Dorsolateral prefrontal cortex (tissue), 120 donors: ENCODE measurements at regions of chr19 and their contacts with region 1.

Region 1: DNA sequence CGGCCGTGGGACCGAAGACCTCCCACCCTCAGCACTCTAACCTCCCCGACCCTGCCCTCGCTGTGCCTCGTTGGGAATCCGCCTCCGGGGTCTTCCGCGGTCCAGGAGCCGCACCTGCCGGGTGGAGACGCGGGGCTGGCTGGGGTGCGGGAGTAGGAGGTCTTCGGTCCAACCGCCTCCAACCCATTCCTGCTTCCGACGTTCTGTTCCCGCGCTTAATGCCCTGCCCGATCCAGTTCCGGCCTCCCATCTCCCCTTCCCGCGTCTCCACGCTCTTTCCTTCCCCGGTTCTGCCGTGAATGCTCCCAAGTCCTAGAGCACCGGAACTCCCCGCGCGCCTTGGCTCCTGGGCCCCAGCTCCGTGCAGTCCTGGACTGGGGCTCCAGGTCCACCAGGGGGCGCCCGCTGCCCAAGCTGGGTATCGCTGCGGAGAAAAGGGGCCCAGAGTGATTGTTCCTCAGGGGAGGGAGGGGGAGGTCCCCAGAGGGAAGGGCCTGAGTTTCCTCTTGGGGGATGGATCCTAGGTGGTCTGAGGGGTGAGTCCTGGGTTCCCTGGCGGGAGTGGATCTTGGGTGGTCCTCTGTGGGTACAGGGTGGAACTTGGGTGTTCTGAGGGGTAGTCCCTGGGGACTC is 14.1 kb upstream of the TNFSF9 start:
- DNase-seq: peak; percentile 85 to 95 (median 93)
- H3K4me3 ChIP-seq: peak overlapping the region; percentile 52 to 87 (median 74)
- H3K27ac ChIP-seq: peak overlapping the region; percentile 6 to 100 (median 91)
- H3K27me3 ChIP-seq: no peaks in the 10 kb centered on the region
- CTCF ChIP-seq: peak; percentile 71 to 98 (median 95)

Region 2: GRCh38 chr19:6460101-6460853 is 56.5 kb before region 1 on chr19:
- intact Hi-C with region 1: loop called in 1 of 2 experiments (anchors 5 kb)
- DNase-seq: peak; percentile 98 to 100 (median 99)
- H3K4me3 ChIP-seq: peak overlapping the region; percentile 52 to 98 (median 86)
- H3K27ac ChIP-seq: peak overlapping the region; percentile 9 to 92 (median 83)
- H3K27me3 ChIP-seq: peaks cover 0 to 27% (median 13%) of the 10 kb centered on the region in 45 donors
- CTCF ChIP-seq: peak in 54 of 56 donors; percentile 7 to 75 (median 52)

Region 3: DNA sequence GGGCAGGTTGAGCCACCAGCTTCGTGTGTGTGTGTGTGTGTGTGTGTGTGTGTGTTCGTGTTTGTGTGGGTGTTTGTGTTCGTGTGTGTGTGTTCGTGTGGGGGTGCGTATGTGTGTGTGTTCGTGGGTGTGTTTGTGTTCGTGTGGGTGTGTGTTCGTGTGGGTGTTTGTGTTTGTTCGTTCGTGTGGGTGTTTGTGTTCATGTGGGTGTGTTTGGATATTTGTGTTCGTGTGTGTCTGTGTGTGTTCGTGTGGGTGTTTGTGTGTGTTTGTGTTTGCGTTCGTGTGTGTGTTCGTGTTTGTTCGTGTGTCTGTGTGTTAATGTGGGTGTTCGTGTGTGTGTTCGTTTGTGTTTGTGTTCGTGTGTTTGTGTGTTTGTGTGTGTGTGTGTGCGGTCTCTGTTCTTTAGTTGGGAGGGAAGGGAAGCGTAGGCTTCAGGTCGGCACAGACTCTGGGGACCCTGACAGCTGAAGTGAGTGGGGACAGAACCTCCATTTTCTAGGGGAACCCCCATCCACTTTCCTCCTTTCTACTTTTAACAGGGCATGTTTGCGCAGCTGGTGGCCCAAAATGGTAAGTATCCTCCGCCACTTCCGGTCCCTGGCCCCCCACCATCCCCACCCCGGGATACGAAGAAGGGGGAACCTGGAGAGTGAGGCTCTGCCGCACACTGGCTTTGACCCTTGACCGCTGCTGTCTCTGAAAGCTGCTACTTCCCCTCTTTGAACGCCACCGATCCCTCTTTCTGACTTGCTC is 15.6 kb after region 1 on chr19:
- intact Hi-C with region 1: no loop called
- DNase-seq: no peak
- H3K4me3 ChIP-seq: peak overlapping the region in 54 of 59 donors; percentile 16 to 95 (median 82)
- H3K27ac ChIP-seq: peak overlapping the region in 9 of 59 donors; percentile 7 to 87 (median 30)
- H3K27me3 ChIP-seq: peaks cover 0 to 5% (median 0%) of the 10 kb centered on the region in 45 donors
- CTCF ChIP-seq: no peak

Region 4: DNA sequence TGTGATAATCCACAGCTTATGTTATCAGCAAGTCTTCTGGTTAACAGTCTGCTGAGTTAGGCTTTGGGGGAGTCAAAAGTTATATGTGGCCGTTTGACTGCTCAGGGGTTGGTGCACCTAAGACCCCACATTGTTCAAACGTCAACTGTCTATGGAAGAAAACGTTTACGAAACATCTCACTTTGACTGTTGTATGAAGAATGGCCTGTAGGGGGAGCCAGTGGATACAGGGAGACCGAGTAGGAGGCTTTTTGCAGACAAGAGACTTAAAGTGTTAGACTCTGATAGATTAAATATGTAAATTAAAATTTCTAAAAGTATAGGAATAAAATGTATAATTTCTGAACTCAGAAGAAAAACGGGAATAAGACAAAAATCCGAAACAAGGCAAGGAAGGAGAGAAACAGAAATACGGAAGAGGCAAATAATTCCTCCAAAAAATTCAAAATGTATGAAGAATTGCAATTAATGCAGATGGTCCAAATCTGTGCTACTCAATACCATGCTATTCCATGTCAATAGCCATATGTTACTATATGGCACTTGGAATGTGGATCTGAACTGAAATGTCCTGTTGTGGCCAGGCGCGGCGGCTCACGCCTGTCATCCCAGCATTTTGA is 115.3 kb after region 1 on chr19:
- intact Hi-C with region 1: loop called in 1 of 2 experiments (anchors 1 kb)
- DNase-seq: peak in 4 of 10 donors; percentile 41 to 61 (median 56)
- H3K4me3 ChIP-seq: no peak overlapping the region
- H3K27ac ChIP-seq: no peak overlapping the region
- H3K27me3 ChIP-seq: peaks cover 0 to 4% (median 0%) of the 10 kb centered on the region in 45 donors
- CTCF ChIP-seq: peak in 55 of 56 donors; percentile 55 to 93 (median 84)

Region 5: GRCh38 chr19:6639439-6639838 is 122.7 kb after region 1 on chr19:
- intact Hi-C with region 1: loop called in 1 of 2 experiments (anchors 2 kb)
- DNase-seq: no peak
- H3K4me3 ChIP-seq: no peak overlapping the region
- H3K27ac ChIP-seq: no peak overlapping the region
- H3K27me3 ChIP-seq: peaks cover 0 to 10% (median 0%) of the 10 kb centered on the region in 45 donors
- CTCF ChIP-seq: no peak

Region 6: DNA sequence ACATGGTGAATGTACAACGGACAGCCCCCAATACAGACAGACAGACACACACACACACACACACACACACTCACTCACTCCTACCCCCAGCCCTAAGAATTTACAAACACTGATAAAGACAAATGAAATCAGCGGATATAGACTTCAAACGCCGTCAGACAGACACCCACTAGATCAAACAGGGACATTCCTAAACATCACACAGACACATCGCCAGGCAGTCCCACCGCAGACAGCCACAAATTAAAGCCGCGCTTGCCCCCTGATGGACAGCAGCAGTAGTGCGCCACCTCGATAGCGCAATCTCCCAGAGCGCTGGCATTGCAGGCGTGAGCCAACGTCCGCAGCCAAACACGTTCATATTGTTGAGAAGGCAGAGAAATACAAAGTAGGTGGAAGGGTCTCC is 345.9 kb after region 1 on chr19:
- intact Hi-C with region 1: loop called (anchors 2 to 5 kb)
- DNase-seq: peak; percentile 19 to 83 (median 78)
- H3K4me3 ChIP-seq: peak overlapping the region in 48 of 59 donors; percentile 7 to 57 (median 37)
- H3K27ac ChIP-seq: no peak overlapping the region
- H3K27me3 ChIP-seq: peaks cover 0 to 7% (median 0%) of the 10 kb centered on the region in 45 donors
- CTCF ChIP-seq: peak; percentile 55 to 91 (median 81)